ENCODE measurements at regions of chr2 and their contacts with region 1.

Region 1: GRCh38 chr2:197297772-197298318 is 12.7 kb downstream of the ANKRD44 start:
- DNase-seq: no peak
- H3K4me3 ChIP-seq: no peak overlapping the region
- H3K27ac ChIP-seq: no peak overlapping the region
- H3K4me1 ChIP-seq: peaks cover 21% of the 10 kb centered on the region
- H3K27me3 ChIP-seq: no peaks in the 10 kb centered on the region
- CTCF ChIP-seq: no peak

Region 2: DNA sequence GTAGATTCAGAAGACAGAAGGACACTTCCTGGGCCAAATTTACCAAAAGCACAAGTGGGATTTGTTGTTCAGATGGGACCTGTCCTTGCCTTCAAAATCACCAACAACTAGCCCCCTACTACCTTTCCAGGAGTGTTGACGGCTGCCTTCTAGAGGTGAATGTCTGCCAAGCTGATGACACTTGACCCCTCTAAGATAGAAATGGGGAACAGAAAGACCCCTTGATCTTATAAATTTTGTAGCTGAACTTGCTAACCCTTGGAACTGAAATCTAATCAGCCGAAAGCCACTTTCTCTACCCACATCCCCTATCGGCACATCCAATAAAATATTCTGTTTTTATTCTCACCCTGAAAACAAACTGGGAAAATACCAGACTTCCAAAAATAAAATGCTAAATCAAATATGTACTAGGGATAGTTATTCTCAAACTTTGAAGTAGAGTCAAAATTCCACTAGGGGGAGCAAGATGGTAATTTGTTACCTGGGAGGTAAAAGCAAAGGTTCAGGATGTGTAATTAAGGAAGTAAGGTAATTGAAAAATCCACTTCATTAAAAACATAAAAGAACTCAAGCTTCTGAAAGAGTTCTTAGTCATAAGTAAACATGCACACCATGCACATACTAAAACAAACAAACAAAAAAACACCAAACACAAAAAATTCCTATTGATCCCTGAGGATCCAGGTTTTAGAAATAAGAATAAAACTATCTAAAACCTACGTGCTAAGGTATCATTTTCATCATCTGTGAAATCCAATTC is 106.5 kb before region 1 on chr2:
- intact Hi-C with region 1: loop called (anchors 5 kb)
- DNase-seq: no peak
- H3K4me3 ChIP-seq: no peak overlapping the region
- H3K27ac ChIP-seq: no peak overlapping the region
- H3K4me1 ChIP-seq: peaks cover 19% of the 10 kb centered on the region
- H3K27me3 ChIP-seq: no peaks in the 10 kb centered on the region
- CTCF ChIP-seq: peak; percentile 74

Region 3: GRCh38 chr2:198214114-198214596 is 916.3 kb after region 1 on chr2:
- intact Hi-C with region 1: no loop called
- DNase-seq: no peak
- H3K4me3 ChIP-seq: no peak overlapping the region
- H3K27ac ChIP-seq: no peak overlapping the region
- H3K4me1 ChIP-seq: no peaks in the 10 kb centered on the region
- H3K27me3 ChIP-seq: no peaks in the 10 kb centered on the region
- CTCF ChIP-seq: no peak

Measured in left ventricle myocardium inferior (tissue), 1 donor.